ENCODE measurements at regions of chr6 and their contacts with region 1.

Region 1: GRCh38 chr6:122749451-122750050 is 30.0 kb upstream of the FABP7 start:
- DNase-seq: no peak
- H3K4me3 ChIP-seq: no peak overlapping the region
- CTCF ChIP-seq: no peak
- POLR2A ChIP-seq: no peak

Region 2: GRCh38 chr6:122778985-122779661 is 29.6 kb after region 1 on chr6:
- intact Hi-C with region 1: no loop called
- DNase-seq: no peak
- H3K4me3 ChIP-seq: no peak overlapping the region
- CTCF ChIP-seq: no peak
- POLR2A ChIP-seq: no peak

Region 3: GRCh38 chr6:122789182-122790027 is 39.9 kb after region 1 on chr6 and contains the start of gene SMPDL3A:
- intact Hi-C with region 1: no loop called
- DNase-seq: peak; percentile 60 to 93
- H3K4me3 ChIP-seq: peak within 1 kb of the TSS; percentile 77
- CTCF ChIP-seq: no peak
- POLR2A ChIP-seq: peak in 1 of 2 donors; percentile 15
- total RNA-seq, gene SMPDL3A: 109 to 120 (median 113) TPM

Region 4: DNA sequence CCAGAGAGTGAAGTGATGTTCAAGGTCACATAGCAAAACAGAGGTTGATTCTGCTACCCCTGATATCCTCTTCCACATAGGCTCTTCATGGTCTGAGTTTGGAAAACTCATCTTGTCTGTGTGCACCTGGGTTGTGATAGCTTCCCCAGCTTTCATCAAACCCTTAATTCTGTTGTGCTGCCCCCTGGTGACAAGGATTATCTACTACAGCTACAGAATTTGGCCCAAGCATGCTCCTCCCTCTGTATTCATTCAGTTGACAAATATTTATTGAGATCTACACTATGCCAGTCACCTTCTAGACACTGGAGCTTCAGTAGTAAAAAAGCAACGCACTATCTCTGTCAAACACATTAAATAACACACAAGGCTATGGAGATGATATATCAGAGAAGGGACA is 89.9 kb after region 1 on chr6:
- intact Hi-C with region 1: loop called (anchors 5 kb)
- DNase-seq: peak in 1 of 2 donors; percentile 64
- H3K4me3 ChIP-seq: no peak overlapping the region
- CTCF ChIP-seq: peak in 1 of 3 donors; percentile 11
- POLR2A ChIP-seq: no peak